Activated CD8-positive, alpha-beta memory T cell treated with anti-CD3 and anti-CD28 coated beads, Interleukin-2, amount 10 ng/mL, durations not matched to agents 7 days and 5 days (primary cell): ENCODE measurements at regions of chr16 and their contacts with region 1.

Region 1: GRCh38 chr16:67246934-67247697 is at the start of gene FHOD1:
- DNase-seq: peak; percentile 99
- ATAC-seq: peak; percentile 74
- H3K4me3 Mint-ChIP-seq: peak within 1 kb of the TSS; percentile 87
- H3K27ac Mint-ChIP-seq: peak within 1 kb of the TSS; percentile 93
- H3K4me1 Mint-ChIP-seq: peaks cover 48% of the 10 kb centered on the region
- H3K27me3 Mint-ChIP-seq: peaks cover 12% of the 10 kb centered on the region
- total RNA-seq, gene FHOD1: 101 to 111 TPM

Region 2: GRCh38 chr16:67191995-67192681 is 55.0 kb before region 1 on chr16 and contains the start of gene E2F4:
- CTCF ChIA-PET with region 1: interaction called, 25 read pairs
- DNase-seq: peak; percentile 93
- ATAC-seq: peak; percentile 92
- H3K4me3 Mint-ChIP-seq: peak within 1 kb of the TSS; percentile 98
- H3K27ac Mint-ChIP-seq: peak within 1 kb of the TSS; percentile 89
- H3K4me1 Mint-ChIP-seq: peaks cover 52% of the 10 kb centered on the region
- H3K27me3 Mint-ChIP-seq: no peaks in the 10 kb centered on the region
- total RNA-seq, gene E2F4: 147 to 148 TPM

Region 3: GRCh38 chr16:67198238-67198734 is 48.8 kb before region 1 on chr16:
- CTCF ChIA-PET with region 1: interaction called, 25 read pairs
- DNase-seq: no peak
- ATAC-seq: peak; percentile 28
- H3K4me3 Mint-ChIP-seq: no peak overlapping the region
- H3K27ac Mint-ChIP-seq: no peak overlapping the region
- H3K4me1 Mint-ChIP-seq: peaks cover 36% of the 10 kb centered on the region
- H3K27me3 Mint-ChIP-seq: no peaks in the 10 kb centered on the region

Region 4: DNA sequence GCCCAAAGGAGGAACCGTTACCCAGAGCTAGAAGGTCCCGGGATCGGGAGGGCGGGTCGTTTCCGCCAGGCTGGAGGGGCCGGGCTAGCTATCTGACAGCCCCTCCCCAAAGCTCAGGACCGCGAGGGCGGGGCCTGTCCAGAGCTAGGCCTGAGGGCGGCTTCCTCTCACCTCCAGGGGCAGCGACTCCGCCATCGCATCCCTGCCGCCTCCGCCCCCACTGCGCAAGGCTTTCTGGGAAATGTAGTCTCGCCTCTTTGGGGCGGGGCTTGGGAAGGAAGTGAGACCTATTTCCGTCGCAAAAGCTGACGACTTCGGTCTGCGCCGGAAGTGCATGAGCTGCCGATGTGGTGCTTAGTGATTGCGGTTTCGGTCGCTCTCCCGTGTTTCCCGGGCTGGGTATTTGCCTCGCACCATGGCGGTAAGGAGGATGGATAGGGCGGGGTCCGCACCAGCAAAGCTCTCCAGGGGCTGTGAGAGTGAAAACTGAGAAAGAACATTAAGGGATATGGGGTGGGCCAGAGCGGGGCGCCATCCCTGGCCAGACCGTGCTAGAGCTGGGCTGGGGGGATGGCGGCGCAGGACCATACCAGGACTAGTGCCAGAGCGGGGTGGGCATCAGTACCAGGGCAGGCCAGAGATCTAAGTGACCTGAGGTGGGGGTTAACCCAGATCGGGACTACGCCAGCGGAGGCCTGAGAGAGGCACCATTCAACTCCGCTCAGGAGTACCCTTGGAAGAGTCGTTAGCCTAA is 20.1 kb before region 1 on chr16 and contains the start of gene TMEM208:
- CTCF ChIA-PET with region 1: interaction called, 41 read pairs
- DNase-seq: peak; percentile 100
- ATAC-seq: peak; percentile 98
- H3K4me3 Mint-ChIP-seq: peak within 1 kb of the TSS; percentile 98
- H3K27ac Mint-ChIP-seq: peak within 1 kb of the TSS; percentile 96
- H3K4me1 Mint-ChIP-seq: peaks cover 50% of the 10 kb centered on the region
- H3K27me3 Mint-ChIP-seq: no peaks in the 10 kb centered on the region
- total RNA-seq, gene TMEM208: 32.3 to 39.7 TPM

Region 5: GRCh38 chr16:67260426-67261075 is 13.4 kb after region 1 on chr16:
- CTCF ChIA-PET with region 1: interaction called, 30 read pairs
- DNase-seq: peak; percentile 59
- ATAC-seq: peak; percentile 59
- H3K4me3 Mint-ChIP-seq: no peak overlapping the region
- H3K27ac Mint-ChIP-seq: no peak overlapping the region
- H3K4me1 Mint-ChIP-seq: no peaks in the 10 kb centered on the region
- H3K27me3 Mint-ChIP-seq: no peaks in the 10 kb centered on the region

Region 6: GRCh38 chr16:67279296-67280089 is 32.4 kb after region 1 on chr16 and contains the start of gene PLEKHG4:
- CTCF ChIA-PET with region 1: interaction called, 10 read pairs
- DNase-seq: peak; percentile 88
- ATAC-seq: peak; percentile 97
- H3K4me3 Mint-ChIP-seq: peak within 1 kb of the TSS; percentile 80
- H3K27ac Mint-ChIP-seq: peak within 1 kb of the TSS; percentile 78
- H3K4me1 Mint-ChIP-seq: peaks cover 19% of the 10 kb centered on the region
- H3K27me3 Mint-ChIP-seq: no peaks in the 10 kb centered on the region
- total RNA-seq, gene PLEKHG4: 7.7 to 12.8 TPM